ENCODE measurements at regions of chr2 and their contacts with region 1.

Region 1: DNA sequence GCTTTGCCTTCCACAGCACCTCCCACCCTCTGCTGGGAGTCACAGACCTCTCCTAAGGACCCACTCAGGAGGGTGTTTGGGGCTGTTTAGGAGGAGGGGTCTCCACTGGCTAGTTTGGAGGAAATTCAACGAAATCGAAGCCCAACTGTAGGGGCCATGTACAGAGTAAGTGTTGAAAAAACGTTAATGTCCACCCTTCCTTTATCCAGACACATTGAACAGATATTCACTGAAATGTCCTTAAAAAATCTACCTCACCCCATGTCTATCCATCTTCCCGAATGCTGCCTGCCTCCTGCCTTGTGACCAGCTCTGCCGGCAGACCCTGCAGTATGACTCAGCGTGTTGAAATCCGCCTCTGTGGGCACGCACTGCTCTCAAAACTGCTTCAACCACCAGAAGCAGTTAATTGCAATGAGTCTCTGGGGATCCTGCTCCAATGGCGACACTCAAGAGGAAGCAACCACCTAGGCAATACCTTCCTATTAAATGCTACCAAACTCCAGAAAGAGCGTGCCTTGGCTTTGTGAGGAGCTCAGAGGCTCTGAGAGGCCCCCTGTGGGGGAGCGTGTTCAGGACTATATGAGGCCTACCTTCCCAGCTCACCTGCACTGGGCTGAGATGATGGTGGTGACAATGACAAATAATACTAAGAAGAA is 61.4 kb upstream of the RTN4 start:
- DNase-seq: peak; percentile 89 to 92
- ATAC-seq: peak; percentile 86
- H3K4me3 ChIP-seq: no peak overlapping the region
- H3K27ac ChIP-seq: peak overlapping the region; percentile 78 to 95
- H3K4me1 ChIP-seq: peaks cover 4 to 5% of the 10 kb centered on the region in 2 donors
- H3K27me3 ChIP-seq: no peaks in the 10 kb centered on the region

Region 2: DNA sequence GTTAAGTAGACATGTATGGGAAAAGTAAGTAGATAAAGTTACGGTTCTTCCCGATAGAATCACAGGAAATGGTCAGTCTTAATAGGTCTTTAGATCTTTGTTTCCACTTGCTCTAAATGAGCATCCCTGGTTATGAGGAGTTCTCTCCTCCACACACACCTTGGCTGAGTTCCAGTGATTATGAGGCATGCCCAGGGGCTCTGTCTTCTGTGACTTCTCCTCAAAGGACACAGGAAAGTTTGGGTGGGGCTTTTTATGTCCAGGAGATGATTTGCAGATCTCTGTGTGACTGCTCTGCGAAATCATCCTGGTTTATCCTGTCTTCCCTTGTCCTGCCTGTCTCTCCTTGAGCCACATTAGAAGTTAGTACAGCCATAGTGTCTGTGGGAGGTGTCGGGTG is 472.1 kb before region 1 on chr2:
- intact Hi-C with region 1: loop called in 1 of 2 experiments (anchors 5 kb)
- DNase-seq: no peak
- ATAC-seq: no peak
- H3K4me3 ChIP-seq: no peak overlapping the region
- H3K27ac ChIP-seq: no peak overlapping the region
- H3K4me1 ChIP-seq: peaks cover 2 to 4% of the 10 kb centered on the region in 2 donors
- H3K27me3 ChIP-seq: no peaks in the 10 kb centered on the region

Region 3: GRCh38 chr2:55088400-55088799 is 23.3 kb before region 1 on chr2:
- intact Hi-C with region 1: no loop called
- DNase-seq: no peak
- ATAC-seq: no peak
- H3K4me3 ChIP-seq: no peak overlapping the region
- H3K27ac ChIP-seq: no peak overlapping the region
- H3K4me1 ChIP-seq: no peaks in the 10 kb centered on the region
- H3K27me3 ChIP-seq: no peaks in the 10 kb centered on the region

Region 4: GRCh38 chr2:55159037-55159651 is 47.4 kb after region 1 on chr2:
- intact Hi-C with region 1: loop called (anchors 5 kb)
- DNase-seq: peak in 1 of 2 donors; percentile 78
- ATAC-seq: peak; percentile 53
- H3K4me3 ChIP-seq: no peak overlapping the region
- H3K27ac ChIP-seq: no peak overlapping the region
- H3K4me1 ChIP-seq: peaks cover 10 to 12% of the 10 kb centered on the region in 2 donors
- H3K27me3 ChIP-seq: no peaks in the 10 kb centered on the region

Measured in aorta (tissue), 5 donors.